Common myeloid progenitor, CD34-positive (primary cell): ENCODE measurements at regions of chr10 and their contacts with region 1.

Region 1: DNA sequence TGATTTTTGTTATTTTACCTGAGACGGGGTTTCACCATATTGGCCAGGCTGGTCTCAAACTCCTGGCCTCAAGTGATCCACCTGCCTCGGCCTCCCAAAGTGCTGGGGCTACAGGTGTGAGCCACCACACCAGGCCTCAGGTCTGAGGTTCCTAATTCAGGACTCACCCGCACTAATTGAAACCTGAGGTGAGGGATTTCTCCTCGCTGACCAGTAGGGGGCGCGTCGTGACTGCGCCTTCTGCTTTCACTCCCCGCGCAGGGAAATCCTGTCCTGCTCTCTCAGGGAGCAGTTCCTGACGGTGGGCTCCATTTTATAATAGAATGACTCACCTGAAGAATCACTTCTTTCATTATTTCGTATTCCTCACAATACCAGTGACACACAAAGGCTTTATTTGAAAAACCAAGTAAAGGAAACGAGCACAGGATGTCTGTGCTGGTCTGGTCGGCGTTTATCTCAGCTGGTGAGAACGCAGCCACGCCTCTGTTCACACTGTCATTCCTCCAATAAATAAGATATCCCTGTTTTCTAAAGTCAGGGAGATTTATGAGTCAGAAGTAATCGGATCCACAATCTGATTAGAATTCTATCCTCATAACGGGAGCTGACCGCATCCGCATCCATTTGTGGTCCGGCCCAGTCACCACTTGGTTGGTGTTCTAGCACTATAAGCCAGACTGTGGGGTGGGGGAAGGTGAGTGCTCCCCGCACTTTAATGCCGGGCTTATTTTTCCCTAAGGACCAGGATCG is 35.4 kb downstream of the BAG3 start:
- DNase-seq: peak; percentile 85 to 89 (median 89)
- H3K4me3 ChIP-seq: peak overlapping the region in 5 of 7 experiments; percentile 46 to 78 (median 57)
- H3K27ac ChIP-seq: no peak overlapping the region
- H3K4me1 ChIP-seq: peaks cover 0 to 16% (median 10%) of the 10 kb centered on the region in 4 experiments
- H3K27me3 ChIP-seq: no peaks in the 10 kb centered on the region

Region 2: GRCh38 chr10:119725828-119726675 is 39.4 kb after region 1 on chr10 and contains the start of gene INPP5F:
- CTCF ChIA-PET with region 1: interaction called, 26 read pairs
- POLR2A ChIA-PET with region 1: interaction called, 5 read pairs
- DNase-seq: peak; percentile 96
- H3K4me3 ChIP-seq: peak within 1 kb of the TSS; percentile 52 to 92 (median 85)
- H3K27ac ChIP-seq: peak within 1 kb of the TSS; percentile 40 to 85
- H3K4me1 ChIP-seq: peaks cover 6 to 46% (median 33%) of the 10 kb centered on the region in 4 experiments
- H3K27me3 ChIP-seq: no peaks in the 10 kb centered on the region

Region 3: DNA sequence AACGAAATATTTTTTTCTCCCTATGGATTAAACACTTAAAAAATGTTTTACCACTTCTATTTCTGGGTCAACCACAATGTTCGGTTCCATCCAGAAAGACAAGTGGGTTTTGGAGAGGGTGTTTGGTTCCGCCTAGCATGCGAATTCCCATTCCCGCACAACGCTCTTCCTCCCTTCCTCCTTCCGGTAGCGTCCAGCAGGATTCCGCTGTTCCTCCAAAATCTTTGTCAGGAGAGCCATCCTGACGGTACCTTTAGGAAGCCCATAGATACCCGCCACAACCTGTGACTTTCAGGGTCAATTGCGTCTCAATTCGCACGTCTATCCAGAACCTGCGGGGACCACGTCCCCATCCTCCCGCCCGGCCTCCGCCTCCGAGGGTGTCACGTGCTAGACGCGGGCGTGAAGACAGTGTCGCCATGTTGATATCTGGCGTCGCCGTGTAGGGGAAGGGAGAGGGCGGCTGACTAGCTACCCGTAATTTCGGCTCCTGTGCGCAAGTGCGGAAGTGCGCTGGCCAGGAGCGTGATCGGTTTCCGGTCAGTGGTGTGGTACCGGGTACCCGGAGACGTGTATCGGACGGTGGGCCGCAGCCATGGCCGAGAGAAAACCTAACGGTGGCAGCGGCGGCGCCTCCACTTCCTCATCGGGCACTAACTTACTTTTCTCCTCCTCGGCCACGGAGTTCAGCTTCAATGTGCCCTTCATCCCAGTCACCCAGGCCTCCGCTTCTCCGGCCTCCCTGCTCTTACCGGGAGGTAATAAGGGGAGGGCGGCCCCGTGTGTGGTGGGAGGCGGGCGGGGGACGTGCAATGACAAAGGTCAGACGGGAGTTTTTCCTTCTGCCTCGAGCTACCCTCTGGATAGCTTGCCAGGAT is 205.8 kb after region 1 on chr10 and contains the start of gene SEC23IP:
- CTCF ChIA-PET with region 1: no interaction called
- POLR2A ChIA-PET with region 1: no interaction called
- DNase-seq: peak; percentile 86 to 93 (median 92)
- H3K4me3 ChIP-seq: peak within 1 kb of the TSS; percentile 77 to 96 (median 92)
- H3K27ac ChIP-seq: peak within 1 kb of the TSS; percentile 77 to 85
- H3K4me1 ChIP-seq: peaks cover 2 to 56% (median 32%) of the 10 kb centered on the region in 4 experiments
- H3K27me3 ChIP-seq: no peaks in the 10 kb centered on the region